ENCODE measurements at regions of chr5 and their contacts with region 1.

Region 1: DNA sequence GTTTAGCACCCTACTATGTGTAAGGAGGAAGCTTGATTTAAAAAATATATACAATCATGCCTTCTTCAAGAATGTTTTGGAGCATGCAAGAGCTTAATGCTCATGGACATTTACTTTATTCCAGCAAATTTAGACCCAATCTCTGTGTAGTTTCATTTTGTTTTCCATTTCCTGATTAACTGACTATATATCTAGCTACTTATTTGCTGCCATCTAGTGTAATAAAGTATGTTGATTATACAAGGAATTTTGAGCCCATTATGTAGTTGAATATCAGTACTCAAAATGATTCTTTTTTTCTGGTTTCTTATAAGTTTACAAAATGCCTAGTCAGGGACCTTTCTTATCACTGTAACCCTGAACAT is 100.0 kb upstream of the CCDC152 start:
- DNase-seq: no peak

Region 2: GRCh38 chr5:42514754-42515153 is 141.9 kb before region 1 on chr5:
- intact Hi-C with region 1: no loop called
- DNase-seq: no peak

Region 3: GRCh38 chr5:42583322-42583721 is 73.3 kb before region 1 on chr5:
- intact Hi-C with region 1: loop called (anchors 5 kb)
- DNase-seq: no peak

Measured in cardiac septum (tissue), 1 donor.